ENCODE measurements at regions of chr3 and their contacts with region 1.

Region 1: GRCh38 chr3:131630097-131630496 is 127.3 kb upstream of the MRPL3 start:
- DNase-seq: no peak
- ATAC-seq: no peak

Region 2: GRCh38 chr3:131568460-131568859 is 61.6 kb before region 1 on chr3:
- intact Hi-C with region 1: loop called in 1 of 2 experiments (anchors 10 kb)
- DNase-seq: no peak
- ATAC-seq: no peak